MCF 10A (cell line): ENCODE measurements at regions of chr7 and their contacts with region 1.

Region 1: GRCh38 chr7:73712773-73713172 is 6.7 kb downstream of the STX1A start:
- DNase-seq: no peak
- H3K4me3 Mint-ChIP-seq: no peak overlapping the region
- H3K27ac Mint-ChIP-seq: no peak overlapping the region
- H3K4me1 Mint-ChIP-seq: peaks cover 17% of the 10 kb centered on the region
- H3K27me3 Mint-ChIP-seq: no peaks in the 10 kb centered on the region
- CTCF ChIP-seq: no peak

Region 2: DNA sequence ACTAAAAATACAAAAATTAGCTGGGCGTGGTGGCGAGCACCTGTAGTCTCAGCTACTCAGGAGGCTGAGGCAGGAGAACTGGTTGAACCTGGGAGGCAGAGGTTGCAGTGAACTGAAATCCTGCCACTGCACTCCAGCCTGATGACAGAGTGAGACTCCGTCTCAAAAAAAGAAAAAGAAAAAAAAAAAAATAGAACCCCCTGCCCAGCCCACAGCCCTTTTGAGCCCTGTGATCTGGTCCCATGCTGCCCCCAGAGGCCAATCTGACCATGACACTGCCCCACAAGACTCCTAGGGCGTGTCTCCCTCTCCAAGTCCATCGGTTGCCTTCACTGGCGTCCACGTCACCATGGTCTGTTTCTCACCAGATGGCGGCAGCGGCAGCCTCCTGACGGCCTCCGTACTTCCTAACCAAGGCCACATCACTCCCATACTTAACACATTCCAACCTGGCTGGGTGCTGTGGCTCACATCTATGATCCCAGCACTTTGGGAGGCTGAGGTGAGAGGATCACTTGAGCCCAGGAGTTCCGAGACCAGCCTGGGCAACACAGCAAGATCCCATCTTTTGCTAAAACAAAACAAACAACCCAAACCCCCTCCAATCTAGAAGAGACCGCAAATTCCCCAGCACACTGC is 11.3 kb before region 1 on chr7:
- CTCF ChIA-PET with region 1: interaction called, 14 read pairs
- POLR2A ChIA-PET with region 1: interaction called, 18 read pairs
- intact Hi-C with region 1: no loop called
- DNase-seq: peak; percentile 44
- H3K4me3 Mint-ChIP-seq: no peak overlapping the region
- H3K27ac Mint-ChIP-seq: peak overlapping the region; percentile 7
- H3K4me1 Mint-ChIP-seq: peaks cover 13% of the 10 kb centered on the region
- H3K27me3 Mint-ChIP-seq: no peaks in the 10 kb centered on the region
- CTCF ChIP-seq: peak; percentile 55